ENCODE measurements at regions of chr1 and their contacts with region 1.

Region 1: DNA sequence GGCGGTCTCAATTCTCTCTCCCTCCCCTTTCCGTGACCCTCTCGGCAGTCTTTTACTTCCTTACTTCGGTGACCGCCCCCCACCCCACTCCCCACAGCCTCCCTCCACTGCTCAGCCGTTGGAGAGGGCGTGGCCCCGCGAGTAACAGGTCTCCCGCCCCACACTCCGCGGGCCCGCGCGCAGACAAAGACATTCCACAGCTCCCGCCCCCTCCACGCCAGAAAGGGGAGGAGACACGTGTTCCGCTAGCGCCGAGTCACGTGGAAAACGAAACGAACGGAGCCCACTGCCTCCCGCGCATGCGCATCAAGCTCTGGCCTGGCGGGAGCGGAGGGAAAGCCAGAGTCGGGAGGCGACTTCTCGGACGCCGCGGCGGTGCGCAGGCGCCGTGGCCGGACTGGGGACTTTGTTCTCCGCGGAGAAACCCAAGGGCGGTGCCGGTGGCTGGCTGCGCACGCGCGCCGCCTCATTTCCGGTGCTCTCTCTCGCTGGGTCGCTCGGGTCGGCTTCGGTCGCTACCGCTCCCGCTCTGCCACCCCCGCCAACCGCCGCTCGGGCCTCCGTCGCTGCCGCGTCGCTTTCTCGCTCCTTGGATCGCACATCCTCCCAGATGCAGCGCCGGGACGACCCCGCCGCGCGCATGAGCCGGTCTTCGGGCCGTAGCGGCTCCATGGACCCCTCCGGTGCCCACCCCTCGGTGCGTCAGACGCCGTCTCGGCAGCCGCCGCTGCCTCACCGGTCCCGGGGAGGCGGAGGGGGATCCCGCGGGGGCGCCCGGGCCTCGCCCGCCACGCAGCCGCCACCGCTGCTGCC is at the start of gene KHDRBS1:
- DNase-seq: peak; percentile 100
- H3K4me3 ChIP-seq: peak within 1 kb of the TSS; percentile 100
- H3K27ac ChIP-seq: peak within 1 kb of the TSS; percentile 100
- H3K4me1 ChIP-seq: peaks cover 24% of the 10 kb centered on the region
- H3K27me3 ChIP-seq: no peaks in the 10 kb centered on the region
- CTCF ChIP-seq: no peak
- total RNA-seq, gene KHDRBS1: 226 and 236 TPM in 2 replicates

Region 2: GRCh38 chr1:30732277-30732996 is 1281.2 kb before region 1 on chr1:
- CTCF ChIA-PET with region 1: interaction called, 12 read pairs
- POLR2A ChIA-PET with region 1: no interaction called
- intact Hi-C with region 1: no loop called
- DNase-seq: no peak
- H3K4me3 ChIP-seq: no peak overlapping the region
- H3K27ac ChIP-seq: no peak overlapping the region
- H3K4me1 ChIP-seq: no peaks in the 10 kb centered on the region
- H3K27me3 ChIP-seq: no peaks in the 10 kb centered on the region
- CTCF ChIP-seq: no peak

Region 3: DNA sequence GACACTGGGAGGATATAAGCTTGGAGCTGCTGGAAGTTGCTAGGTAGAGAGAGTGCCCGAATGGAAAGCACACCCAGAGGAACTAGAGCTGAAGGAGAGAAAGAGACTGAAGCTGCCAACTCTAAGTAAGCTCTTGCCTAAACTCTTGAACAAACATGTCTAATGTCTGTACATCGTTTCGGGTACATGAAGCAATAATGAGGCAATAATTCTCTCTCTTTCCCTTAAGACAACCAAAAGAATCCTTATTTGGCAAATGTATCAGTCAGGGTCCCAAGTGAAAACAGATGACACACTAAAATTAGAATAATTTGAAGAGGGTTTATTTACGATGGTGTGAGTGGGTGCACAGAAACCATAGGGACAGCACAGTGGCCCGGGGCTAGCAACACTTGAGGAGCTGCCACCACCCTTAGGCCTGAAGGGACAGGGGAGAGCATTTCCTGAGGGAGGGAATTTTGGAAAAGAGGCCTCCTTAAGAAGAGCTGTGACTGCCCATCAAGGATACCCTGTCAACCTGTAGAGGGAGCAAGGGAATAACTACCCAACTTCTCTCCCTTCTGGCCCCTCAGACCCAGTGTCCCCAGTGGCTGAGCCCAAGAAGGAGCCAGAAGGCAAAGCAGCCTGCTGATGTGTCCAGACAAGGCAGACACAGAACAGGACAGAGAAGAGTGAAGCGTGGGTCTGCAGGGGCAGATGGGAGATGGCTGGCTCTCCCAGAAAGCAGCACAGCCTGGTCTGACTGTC is 36.0 kb before region 1 on chr1:
- CTCF ChIA-PET with region 1: no interaction called
- POLR2A ChIA-PET with region 1: no interaction called
- intact Hi-C with region 1: no loop called
- DNase-seq: peak; percentile 60
- H3K4me3 ChIP-seq: no peak overlapping the region
- H3K27ac ChIP-seq: peak overlapping the region; percentile 66
- H3K4me1 ChIP-seq: peaks cover 14% of the 10 kb centered on the region
- H3K27me3 ChIP-seq: no peaks in the 10 kb centered on the region
- CTCF ChIP-seq: peak; percentile 58

Measured in A673 (cell line).